T-cell (primary cell): ENCODE measurements at regions of chr5 and their contacts with region 1.

Region 1: DNA sequence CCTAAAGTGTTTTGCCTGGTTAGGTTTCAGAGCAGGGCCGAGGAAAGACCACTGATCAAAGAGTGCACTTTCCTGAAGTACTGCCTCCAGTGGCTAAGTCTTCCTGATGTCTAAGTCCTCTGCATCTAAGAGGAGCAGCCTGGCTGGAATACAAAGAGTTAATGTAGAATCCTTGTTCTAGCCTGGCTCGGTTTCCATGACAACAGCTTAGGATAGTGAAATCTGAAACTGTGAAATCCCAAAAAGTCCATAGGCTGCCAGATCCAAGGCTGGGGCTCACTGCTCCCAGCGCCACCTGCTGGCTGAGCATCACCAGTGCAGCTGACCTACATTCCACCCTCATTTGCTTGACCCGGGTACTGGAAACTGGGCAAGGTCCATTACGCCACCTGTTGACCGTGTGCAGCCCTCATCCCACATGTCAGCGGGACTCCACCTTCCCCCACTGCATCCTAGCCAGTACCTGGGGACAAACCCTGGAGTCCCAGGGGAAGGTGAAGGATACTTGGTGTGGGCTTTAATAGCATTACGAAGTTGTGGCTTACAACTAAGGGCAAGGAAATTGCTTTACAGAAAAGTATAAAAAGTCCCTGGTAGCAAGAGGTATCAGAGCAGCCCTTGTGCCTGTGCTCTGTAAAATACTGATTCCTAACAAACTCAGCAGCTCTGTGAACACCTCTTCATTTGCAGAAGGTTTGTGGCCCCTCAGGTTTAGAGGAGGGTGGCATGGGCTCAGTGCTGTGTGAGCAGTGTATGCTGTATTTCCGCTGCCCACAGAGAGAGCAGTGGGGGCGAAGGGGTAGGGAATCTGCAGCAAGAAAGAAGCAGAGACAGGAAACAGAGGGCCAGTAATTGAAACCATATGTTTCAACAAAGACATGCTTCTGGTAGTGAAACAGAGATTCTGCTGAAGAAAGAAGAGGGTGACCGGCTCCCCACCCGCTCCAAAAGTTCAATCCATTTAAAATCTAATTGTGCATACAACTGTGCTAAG is 36.0 kb downstream of the PCDHGC5 start:
- DNase-seq: peak in 27 of 35 experiments; percentile 8 to 73 (median 33)
- ATAC-seq: peak; percentile 75 to 77 (median 76)
- H3K4me3 ChIP-seq: no peak overlapping the region
- H3K4me3 Mint-ChIP-seq: no peak overlapping the region
- H3K27ac ChIP-seq: peak overlapping the region; percentile 25
- H3K27ac Mint-ChIP-seq: peak overlapping the region; percentile 41 to 53
- H3K4me1 ChIP-seq: no peaks in the 10 kb centered on the region
- H3K4me1 Mint-ChIP-seq: peaks cover 16 to 36% (median 35%) of the 10 kb centered on the region in 3 donors
- H3K27me3 ChIP-seq: no peaks in the 10 kb centered on the region
- H3K27me3 Mint-ChIP-seq: no peaks in the 10 kb centered on the region

Region 2: DNA sequence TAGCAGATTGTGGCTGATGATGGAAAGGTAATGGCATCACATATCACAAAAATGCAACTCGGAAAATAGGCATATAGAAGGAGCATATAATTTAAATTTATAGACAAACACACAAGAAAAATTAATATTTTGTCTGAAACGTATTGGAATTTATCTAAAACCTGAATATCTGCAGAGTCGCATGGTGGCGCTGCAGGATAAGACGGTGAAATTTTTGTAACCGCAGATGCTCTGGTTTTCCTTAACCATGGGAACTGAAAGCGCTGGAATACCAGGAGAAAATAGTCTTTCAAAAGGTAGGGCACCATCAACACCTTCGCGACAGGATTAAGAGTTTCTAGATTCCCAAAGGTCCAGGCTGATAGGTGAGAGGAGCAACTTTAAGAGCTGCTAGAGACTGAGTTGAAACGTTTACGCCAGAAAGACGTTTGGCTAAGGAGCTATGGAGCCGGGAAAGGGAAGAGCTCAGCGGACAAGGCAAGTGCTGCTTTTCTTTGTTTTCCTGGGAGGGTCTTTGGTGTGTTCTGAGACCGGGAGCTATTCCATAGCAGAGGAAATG is 290.7 kb before region 1 on chr5:
- CTCF ChIA-PET with region 1: no interaction called
- POLR2A ChIA-PET with region 1: interaction called in 1 of 2 experiments, 13 read pairs
- DNase-seq: no peak
- ATAC-seq: no peak
- H3K4me3 ChIP-seq: no peak overlapping the region
- H3K4me3 Mint-ChIP-seq: no peak overlapping the region
- H3K27ac ChIP-seq: no peak overlapping the region
- H3K27ac Mint-ChIP-seq: no peak overlapping the region
- H3K4me1 ChIP-seq: no peaks in the 10 kb centered on the region
- H3K4me1 Mint-ChIP-seq: no peaks in the 10 kb centered on the region
- H3K27me3 ChIP-seq: peaks cover 0 to 20% of the 10 kb centered on the region in 2 experiments
- H3K27me3 Mint-ChIP-seq: peaks cover 35 to 43% of the 10 kb centered on the region in 2 donors

Region 3: DNA sequence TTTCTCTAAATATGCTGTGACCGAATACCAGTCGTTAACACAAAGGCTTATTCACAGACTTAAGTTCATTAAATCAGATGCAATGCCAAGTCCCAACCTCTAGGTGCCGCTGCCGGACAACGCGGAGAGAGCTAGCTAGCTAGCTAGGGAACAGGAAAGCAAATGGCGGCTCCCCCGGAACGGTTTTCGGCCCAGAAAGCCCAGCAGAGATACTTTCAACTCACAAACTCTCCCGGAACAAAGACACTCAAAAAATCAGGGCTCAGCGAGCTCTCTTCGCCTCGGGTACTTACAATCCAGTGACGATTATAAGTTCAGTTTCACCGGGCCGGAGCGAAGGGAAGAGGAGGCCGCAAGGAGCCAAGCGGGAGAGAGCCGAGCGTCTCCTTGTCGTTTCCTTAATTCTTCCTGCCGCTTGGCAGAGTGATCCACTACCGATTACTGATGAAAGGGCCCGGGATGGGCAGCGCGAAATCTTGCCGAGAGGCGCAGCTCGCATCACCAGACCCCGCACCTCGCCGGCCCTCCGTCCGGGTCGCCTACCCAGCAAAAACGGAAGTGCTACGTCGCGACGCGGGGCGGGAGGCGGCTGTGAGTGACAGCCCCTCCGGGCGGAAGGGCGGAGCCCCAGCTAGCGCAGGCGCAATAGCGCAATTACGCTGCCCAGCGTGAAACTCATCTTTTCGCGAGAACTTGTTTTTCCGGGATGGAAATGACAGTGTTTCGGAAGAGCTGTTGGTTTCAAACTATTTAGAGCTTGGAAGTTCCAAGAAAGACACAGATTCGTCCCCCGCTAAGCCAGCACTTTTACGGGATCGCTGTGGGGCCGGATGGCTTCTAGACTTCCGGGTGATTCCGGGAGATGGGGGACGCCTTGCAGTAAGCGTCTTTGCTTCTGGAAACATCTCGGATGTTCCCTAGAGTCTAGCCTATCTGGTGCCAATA is 204.4 kb before region 1 on chr5 and contains the start of gene TAF7:
- CTCF ChIA-PET with region 1: interaction called, 6 to 16 read pairs
- POLR2A ChIA-PET with region 1: no interaction called
- DNase-seq: peak; percentile 82 to 96 (median 89)
- ATAC-seq: peak; percentile 92 to 93 (median 92)
- H3K4me3 ChIP-seq: peak within 1 kb of the TSS; percentile 90 to 98
- H3K4me3 Mint-ChIP-seq: peak within 1 kb of the TSS; percentile 97 to 99 (median 99)
- H3K27ac ChIP-seq: peak within 1 kb of the TSS; percentile 98
- H3K27ac Mint-ChIP-seq: peak within 1 kb of the TSS; percentile 97 to 98
- H3K4me1 ChIP-seq: peaks cover 2 to 19% of the 10 kb centered on the region in 2 experiments
- H3K4me1 Mint-ChIP-seq: peaks cover 30 to 35% (median 33%) of the 10 kb centered on the region in 3 donors
- H3K27me3 ChIP-seq: no peaks in the 10 kb centered on the region
- H3K27me3 Mint-ChIP-seq: peaks cover 2 to 3% of the 10 kb centered on the region in 2 donors
- total RNA-seq, gene TAF7: 83.7 to 103 (median 101) TPM

Region 4: DNA sequence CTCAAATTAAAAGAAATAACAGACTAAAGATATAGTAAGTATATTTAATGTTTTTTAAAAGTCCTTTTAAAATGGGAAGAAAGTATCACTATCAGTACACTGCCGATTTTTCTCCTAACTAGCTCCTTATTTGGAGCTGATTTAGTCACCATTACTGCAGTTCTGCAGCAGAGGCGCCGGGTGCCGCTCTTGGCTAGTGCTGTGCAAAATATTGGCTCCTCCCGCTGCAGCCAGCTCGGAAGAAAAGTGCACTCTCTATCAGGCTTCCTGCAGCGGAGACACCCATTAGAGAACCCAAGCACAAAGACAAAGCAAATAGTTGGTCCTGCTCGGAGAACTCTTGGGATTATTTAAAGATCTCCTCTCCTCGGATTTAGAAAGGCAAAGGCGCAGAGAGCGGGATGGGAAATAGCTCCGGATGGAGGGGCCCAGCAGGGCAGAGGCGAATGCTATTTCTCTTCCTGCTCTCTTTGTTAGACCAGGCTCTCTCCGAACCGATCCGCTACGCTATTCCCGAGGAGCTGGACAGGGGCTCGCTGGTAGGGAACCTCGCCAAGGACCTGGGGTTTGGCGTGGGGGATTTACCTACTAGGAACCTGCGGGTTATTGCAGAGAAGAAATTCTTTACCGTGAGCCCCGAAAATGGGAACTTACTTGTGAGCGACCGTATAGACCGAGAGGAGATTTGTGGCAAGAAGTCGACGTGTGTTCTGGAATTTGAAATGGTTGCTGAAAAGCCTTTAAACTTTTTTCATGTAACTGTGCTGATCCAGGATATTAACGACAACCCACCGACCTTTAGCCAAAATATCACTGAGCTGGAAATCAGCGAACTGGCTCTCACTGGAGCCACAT is 154.7 kb before region 1 on chr5 and contains the start of gene PCDHGB3:
- CTCF ChIA-PET with region 1: interaction called in 1 of 2 experiments, 13 read pairs
- POLR2A ChIA-PET with region 1: no interaction called
- DNase-seq: peak in 19 of 35 experiments; percentile 6 to 51 (median 25)
- ATAC-seq: peak in 3 of 4 experiments; percentile 52 to 85 (median 82)
- H3K4me3 ChIP-seq: peak within 1 kb of the TSS; percentile 12 to 58
- H3K4me3 Mint-ChIP-seq: peak within 1 kb of the TSS; percentile 66 to 80 (median 77)
- H3K27ac ChIP-seq: no peak within 1 kb of the TSS
- H3K27ac Mint-ChIP-seq: no peak within 1 kb of the TSS
- H3K4me1 ChIP-seq: peaks cover 0 to 7% of the 10 kb centered on the region in 2 experiments
- H3K4me1 Mint-ChIP-seq: peaks cover 7 to 9% (median 8%) of the 10 kb centered on the region in 3 donors
- H3K27me3 ChIP-seq: peaks cover 32 to 61% of the 10 kb centered on the region in 2 experiments
- H3K27me3 Mint-ChIP-seq: peaks cover 56 to 84% of the 10 kb centered on the region in 2 donors
- total RNA-seq, gene PCDHGB3: 0.20 to 0.85 (median 0.41) TPM

Region 5: GRCh38 chr5:141512390-141512910 is 12.5 kb before region 1 on chr5:
- CTCF ChIA-PET with region 1: interaction called, 14 to 25 read pairs
- POLR2A ChIA-PET with region 1: interaction called in 1 of 2 experiments, 3 read pairs
- DNase-seq: peak; percentile 41 to 88 (median 74)
- ATAC-seq: peak; percentile 45 to 64 (median 53)
- H3K4me3 ChIP-seq: peak overlapping the region; percentile 50 to 86
- H3K4me3 Mint-ChIP-seq: peak overlapping the region; percentile 80 to 91 (median 86)
- H3K27ac ChIP-seq: no peak overlapping the region
- H3K27ac Mint-ChIP-seq: peak overlapping the region; percentile 34 to 80
- H3K4me1 ChIP-seq: peaks cover 3 to 37% of the 10 kb centered on the region in 2 experiments
- H3K4me1 Mint-ChIP-seq: peaks cover 27 to 41% (median 33%) of the 10 kb centered on the region in 3 donors
- H3K27me3 ChIP-seq: peaks cover 0 to 3% of the 10 kb centered on the region in 2 experiments
- H3K27me3 Mint-ChIP-seq: no peaks in the 10 kb centered on the region